Pancreas (tissue), 10 donors: ENCODE measurements at regions of chr19 and their contacts with region 1.

Region 1: GRCh38 chr19:30682999-30683536 is 310.9 kb downstream of the ZNF536 start:
- DNase-seq: peak in 5 of 6 donors; percentile 60 to 92 (median 76)
- ATAC-seq: peak; percentile 90 to 99 (median 97)
- H3K4me3 ChIP-seq: no peak overlapping the region
- H3K27ac ChIP-seq: no peak overlapping the region
- H3K4me1 ChIP-seq: no peaks in the 10 kb centered on the region
- H3K27me3 ChIP-seq: peaks cover 0 to 8% (median 0%) of the 10 kb centered on the region in 4 donors
- CTCF ChIP-seq: peak; percentile 70 to 86 (median 79)

Region 2: GRCh38 chr19:31350701-31351068 is 667.6 kb after region 1 on chr19:
- intact Hi-C with region 1: loop called in 1 of 3 experiments (anchors 10 kb)
- DNase-seq: peak; percentile 45 to 86 (median 61)
- ATAC-seq: peak; percentile 47 to 74 (median 63)
- H3K4me3 ChIP-seq: peak overlapping the region; percentile 77 to 95 (median 86)
- H3K27ac ChIP-seq: peak overlapping the region in 2 of 4 donors; percentile 63 to 65
- H3K4me1 ChIP-seq: no peaks in the 10 kb centered on the region
- H3K27me3 ChIP-seq: peaks cover 0 to 19% (median 2%) of the 10 kb centered on the region in 4 donors
- CTCF ChIP-seq: no peak

Region 3: DNA sequence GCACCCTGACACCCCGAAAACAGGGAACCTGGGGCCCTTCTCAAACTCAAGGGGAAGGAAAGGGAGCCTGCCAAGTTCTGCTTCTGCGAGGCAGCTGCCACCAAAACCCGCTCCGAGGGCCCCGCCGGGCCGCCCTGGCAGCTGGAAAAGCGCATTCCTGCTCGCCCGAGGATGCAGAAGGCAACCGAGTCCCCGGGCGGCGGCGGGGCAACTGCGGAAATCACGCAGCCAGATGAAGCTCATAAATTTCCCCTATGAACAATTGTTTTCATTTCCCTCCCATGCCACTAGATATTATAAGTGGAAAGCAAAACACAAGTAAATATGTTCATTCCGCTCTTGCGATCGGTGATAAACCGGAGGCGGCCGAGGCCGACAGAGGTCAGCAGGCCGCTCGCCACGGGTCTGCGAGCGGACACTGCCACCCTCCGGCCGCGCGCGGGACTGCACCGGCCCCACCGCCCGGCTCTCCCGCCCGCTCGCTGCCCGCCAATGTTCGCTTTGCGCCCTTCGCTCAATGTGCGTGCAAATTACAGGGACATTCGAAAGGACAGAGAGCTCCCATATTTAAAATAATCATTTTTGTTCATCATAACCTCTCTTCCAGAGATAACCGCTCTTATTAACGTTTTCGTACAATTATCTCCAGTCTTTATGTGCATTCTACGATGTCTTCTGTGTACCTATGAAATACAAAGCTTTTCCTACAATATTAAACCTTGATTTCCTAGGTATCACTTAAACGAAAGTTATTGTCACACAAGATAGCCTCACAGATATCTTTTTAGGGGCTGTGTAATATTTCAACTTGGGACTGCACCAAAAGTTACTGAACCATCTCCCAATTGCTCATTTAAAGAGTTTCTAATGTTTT is 1541.5 kb after region 1 on chr19:
- intact Hi-C with region 1: loop called in 1 of 3 experiments (anchors 10 kb)
- DNase-seq: peak in 5 of 6 donors; percentile 25 to 94 (median 69)
- ATAC-seq: peak; percentile 81 to 99 (median 97)
- H3K4me3 ChIP-seq: peak overlapping the region in 1 of 4 donors; percentile 9
- H3K27ac ChIP-seq: no peak overlapping the region
- H3K4me1 ChIP-seq: no peaks in the 10 kb centered on the region
- H3K27me3 ChIP-seq: peaks cover 0 to 14% (median 8%) of the 10 kb centered on the region in 4 donors
- CTCF ChIP-seq: peak; percentile 98 to 100 (median 99)